ENCODE measurements at regions of chr3 and their contacts with region 1.

Region 1: DNA sequence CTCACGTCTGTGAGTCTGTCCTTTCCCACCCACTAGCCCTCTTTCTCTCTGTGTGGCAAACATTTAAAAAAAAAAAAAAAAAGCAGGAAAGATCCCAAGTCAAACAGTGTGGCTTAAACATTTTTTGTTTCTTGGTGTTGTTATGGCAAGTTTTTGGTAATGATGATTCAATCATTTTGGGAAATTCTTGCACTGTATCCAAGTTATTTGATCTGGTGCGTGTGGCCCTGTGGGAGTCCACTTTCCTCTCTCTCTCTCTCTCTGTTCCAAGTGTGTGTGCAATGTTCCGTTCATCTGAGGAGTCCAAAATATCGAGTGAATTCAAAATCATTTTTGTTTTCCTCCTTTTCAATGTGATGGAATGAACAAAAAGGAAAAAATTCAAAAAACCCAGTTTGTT is 97.7 kb downstream of the GAP43 start:
- DNase-seq: no peak
- ATAC-seq: no peak
- H3K4me3 ChIP-seq: no peak overlapping the region
- H3K27ac ChIP-seq: no peak overlapping the region
- H3K4me1 ChIP-seq: no peaks in the 10 kb centered on the region
- H3K27me3 ChIP-seq: no peaks in the 10 kb centered on the region
- CTCF ChIP-seq: no peak
- POLR2A ChIP-seq: no peak
- RAD21 ChIP-seq: no peak

Region 2: GRCh38 chr3:115363071-115363470 is 357.9 kb before region 1 on chr3:
- CTCF ChIA-PET with region 1: no interaction called
- POLR2A ChIA-PET with region 1: no interaction called
- RAD21 ChIA-PET with region 1: no interaction called
- intact Hi-C with region 1: no loop called
- DNase-seq: no peak
- ATAC-seq: no peak
- H3K4me3 ChIP-seq: no peak overlapping the region
- H3K27ac ChIP-seq: no peak overlapping the region
- H3K4me1 ChIP-seq: no peaks in the 10 kb centered on the region
- H3K27me3 ChIP-seq: no peaks in the 10 kb centered on the region
- CTCF ChIP-seq: no peak
- POLR2A ChIP-seq: no peak
- RAD21 ChIP-seq: no peak

Region 3: DNA sequence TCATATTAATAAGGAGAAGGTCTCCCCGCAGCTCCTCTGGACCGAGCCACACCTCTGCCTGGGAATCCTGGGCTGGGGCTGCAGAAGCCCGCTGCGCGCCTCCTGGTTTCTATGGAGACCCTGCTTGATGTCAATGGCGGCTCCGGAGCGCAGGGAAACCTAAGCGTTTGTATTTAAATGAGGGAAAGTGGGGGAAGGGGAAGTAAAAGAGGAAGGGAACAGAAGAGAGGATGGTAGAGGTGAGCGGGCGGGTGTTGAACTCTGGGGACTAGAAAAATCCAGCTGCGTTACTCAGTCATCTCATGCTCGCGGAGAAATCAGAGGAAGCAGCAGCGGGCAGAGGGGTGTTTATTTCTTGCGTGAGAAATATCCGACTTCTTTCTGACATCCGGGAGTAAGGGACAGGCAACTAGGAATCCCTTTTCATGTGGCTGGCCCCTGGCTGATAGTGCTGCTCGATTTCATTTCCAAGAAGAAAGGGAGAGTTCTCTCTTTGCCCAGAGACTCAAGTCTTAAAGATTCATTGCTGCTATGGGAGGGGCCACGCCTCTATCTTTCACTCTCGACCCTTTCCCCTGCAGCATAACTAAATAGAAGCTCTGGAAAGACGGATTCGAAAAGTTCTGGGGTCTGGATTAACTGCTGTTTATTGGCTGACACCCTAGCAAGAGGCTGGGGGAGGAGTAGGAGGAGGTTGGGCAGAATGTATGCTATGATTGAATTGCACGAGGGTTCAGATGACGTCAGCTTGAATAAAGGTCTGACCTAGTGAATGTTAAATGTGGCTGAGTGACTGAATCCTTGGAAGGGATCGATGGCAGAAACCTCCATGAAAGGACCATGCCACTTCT is 208.2 kb before region 1 on chr3:
- CTCF ChIA-PET with region 1: no interaction called
- POLR2A ChIA-PET with region 1: no interaction called
- RAD21 ChIA-PET with region 1: no interaction called
- intact Hi-C with region 1: no loop called
- DNase-seq: no peak
- ATAC-seq: no peak
- H3K4me3 ChIP-seq: no peak overlapping the region
- H3K27ac ChIP-seq: no peak overlapping the region
- H3K4me1 ChIP-seq: no peaks in the 10 kb centered on the region; a peak in 1 of 4 replicates
- H3K27me3 ChIP-seq: peaks cover 9% of the 10 kb centered on the region; the same call in 1 of the 2 replicates
- CTCF ChIP-seq: no peak
- POLR2A ChIP-seq: no peak
- RAD21 ChIP-seq: no peak

Region 4: DNA sequence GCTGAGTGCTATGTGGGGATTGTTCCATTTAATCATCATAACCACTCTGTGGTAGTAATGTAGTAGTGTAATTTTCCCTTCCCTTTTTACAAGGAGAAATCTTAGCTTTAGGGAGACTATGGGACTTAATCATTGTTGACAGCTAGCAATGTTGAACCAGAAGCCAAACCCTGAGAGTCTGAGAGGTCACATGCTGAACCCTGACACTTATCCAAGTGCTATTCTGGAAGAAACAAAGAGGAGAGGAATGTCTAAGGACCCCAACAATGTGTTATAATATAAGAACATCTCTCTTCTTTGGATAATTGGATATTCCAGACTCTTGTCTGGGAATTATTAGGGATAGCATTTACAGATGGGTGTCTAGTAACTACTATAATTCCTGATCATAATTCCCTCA is 39.2 kb before region 1 on chr3:
- CTCF ChIA-PET with region 1: no interaction called
- POLR2A ChIA-PET with region 1: no interaction called
- RAD21 ChIA-PET with region 1: no interaction called
- intact Hi-C with region 1: loop called (anchors 1 kb)
- DNase-seq: no peak
- ATAC-seq: no peak
- H3K4me3 ChIP-seq: no peak overlapping the region
- H3K27ac ChIP-seq: no peak overlapping the region
- H3K4me1 ChIP-seq: no peaks in the 10 kb centered on the region
- H3K27me3 ChIP-seq: no peaks in the 10 kb centered on the region
- CTCF ChIP-seq: no peak
- POLR2A ChIP-seq: no peak
- RAD21 ChIP-seq: no peak

Region 5: DNA sequence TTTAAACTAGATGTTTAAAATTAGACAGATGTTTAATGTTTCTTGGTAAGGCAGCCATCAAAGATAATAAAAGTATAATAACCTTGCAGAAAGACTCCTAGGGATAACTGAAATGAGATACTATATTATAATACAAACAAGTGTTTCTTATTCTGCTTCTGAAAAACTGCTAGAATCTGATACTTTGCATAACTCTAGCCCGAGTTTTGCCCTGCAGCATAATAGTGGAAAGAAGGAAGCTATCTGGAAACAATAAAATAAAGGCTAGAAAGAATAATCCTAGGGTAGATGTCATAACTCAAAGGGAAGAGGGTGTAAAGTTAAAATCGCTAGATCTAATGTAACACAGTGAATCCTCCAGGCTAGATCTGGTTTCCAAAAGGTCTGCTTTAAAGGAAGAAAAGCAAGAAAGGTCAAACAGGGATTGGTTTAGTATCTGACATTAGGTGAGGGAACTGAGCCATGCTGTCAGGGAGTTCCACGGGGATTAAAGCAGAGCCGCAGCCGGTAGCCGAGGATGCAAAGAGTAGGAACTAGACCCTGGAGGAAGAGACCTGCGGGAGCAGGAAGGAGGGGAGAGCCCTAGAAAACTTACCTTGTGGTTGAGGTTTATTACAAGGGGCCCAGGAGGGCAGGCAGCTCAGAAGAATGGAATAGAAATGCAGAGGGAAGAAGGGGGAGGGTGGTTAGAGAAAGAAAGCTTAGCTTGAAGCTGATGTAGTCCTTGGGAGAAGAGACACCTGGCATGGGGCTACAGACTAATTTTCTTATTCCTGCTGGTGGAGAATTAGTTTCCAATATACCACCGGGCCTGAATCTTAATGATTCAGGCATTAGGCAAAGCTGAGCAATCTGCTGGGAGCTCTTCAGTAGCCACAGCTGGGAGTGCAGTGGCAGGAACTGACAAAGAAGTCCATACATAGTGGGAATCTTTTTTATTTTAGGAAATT is 942.5 kb after region 1 on chr3:
- CTCF ChIA-PET with region 1: no interaction called
- POLR2A ChIA-PET with region 1: no interaction called
- RAD21 ChIA-PET with region 1: no interaction called
- intact Hi-C with region 1: no loop called
- DNase-seq: no peak
- ATAC-seq: no peak
- H3K4me3 ChIP-seq: no peak overlapping the region
- H3K27ac ChIP-seq: no peak overlapping the region
- H3K4me1 ChIP-seq: no peaks in the 10 kb centered on the region
- H3K27me3 ChIP-seq: no peaks in the 10 kb centered on the region
- CTCF ChIP-seq: no peak
- POLR2A ChIP-seq: no peak
- RAD21 ChIP-seq: no peak